ENCODE measurements at regions of chr11 and their contacts with region 1.

Region 1: DNA sequence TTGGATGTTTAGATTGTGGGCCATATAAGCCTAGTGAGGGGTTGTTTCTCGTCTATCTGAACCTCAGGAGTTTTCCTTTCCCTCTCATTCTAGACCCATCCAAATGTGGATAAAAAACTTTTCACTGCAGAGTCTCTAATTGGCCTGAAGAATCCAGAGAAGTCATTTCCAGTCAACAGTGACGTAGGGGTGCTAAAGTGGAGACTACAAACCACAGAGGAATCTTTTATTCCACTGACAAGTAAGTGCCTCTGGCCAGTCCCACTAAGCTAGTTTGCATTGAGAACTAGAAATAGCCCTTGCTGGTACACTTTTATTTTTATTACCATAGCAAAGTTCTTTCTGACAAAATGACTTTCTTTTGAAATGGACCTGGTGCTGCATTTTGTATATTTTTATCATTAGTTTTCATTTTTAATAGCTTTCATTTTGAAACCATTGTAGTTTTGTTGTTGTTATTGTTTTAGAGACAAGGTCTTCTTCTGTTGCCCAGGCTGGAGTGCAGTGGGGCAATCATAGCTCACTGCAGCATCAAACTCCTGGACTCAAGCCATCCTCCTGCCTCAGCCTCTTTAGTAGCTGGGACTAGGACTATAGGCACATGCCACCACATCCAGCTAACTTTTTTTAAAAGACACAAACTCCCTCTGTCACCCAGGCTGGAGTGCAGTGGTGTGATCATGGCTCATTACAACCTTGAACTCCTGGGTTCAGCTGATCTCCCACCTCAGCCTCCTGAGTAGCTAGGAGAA is 14.6 kb upstream of the PHLDB1 start:
- DNase-seq: no peak
- H3K4me3 ChIP-seq: no peak overlapping the region
- H3K27ac ChIP-seq: peak overlapping the region in 1 of 2 experiments; percentile 18; a peak in 1 of 4 replicates
- H3K4me1 ChIP-seq: peaks cover 0 to 6% of the 10 kb centered on the region in 2 experiments; a peak in 2 of 4 replicates
- H3K27me3 ChIP-seq: no peaks in the 10 kb centered on the region
- CTCF ChIP-seq: no peak
- EP300 ChIP-seq: no peak
- RAD21 ChIP-seq: no peak

Region 2: GRCh38 chr11:118581057-118581456 is 11.7 kb before region 1 on chr11:
- CTCF ChIA-PET with region 1: interaction called, 20 read pairs
- POLR2A ChIA-PET with region 1: no interaction called
- DNase-seq: no peak
- H3K4me3 ChIP-seq: no peak overlapping the region
- H3K27ac ChIP-seq: no peak overlapping the region
- H3K4me1 ChIP-seq: no peaks in the 10 kb centered on the region; a peak in 1 of 4 replicates
- H3K27me3 ChIP-seq: no peaks in the 10 kb centered on the region
- CTCF ChIP-seq: no peak
- EP300 ChIP-seq: no peak
- RAD21 ChIP-seq: no peak

Region 3: GRCh38 chr11:118610804-118611795 is 18.3 kb after region 1 on chr11:
- CTCF ChIA-PET with region 1: interaction called, 10 read pairs
- POLR2A ChIA-PET with region 1: no interaction called
- DNase-seq: no peak
- H3K4me3 ChIP-seq: no peak overlapping the region; a peak in 1 of 4 replicates
- H3K27ac ChIP-seq: no peak overlapping the region
- H3K4me1 ChIP-seq: peaks cover 14 to 41% of the 10 kb centered on the region in 2 experiments
- H3K27me3 ChIP-seq: no peaks in the 10 kb centered on the region
- CTCF ChIP-seq: peak; percentile 54
- EP300 ChIP-seq: no peak
- RAD21 ChIP-seq: no peak

Region 4: GRCh38 chr11:118634431-118635236 is 41.8 kb after region 1 on chr11:
- CTCF ChIA-PET with region 1: interaction called, 20 read pairs
- POLR2A ChIA-PET with region 1: no interaction called
- DNase-seq: peak; percentile 69
- H3K4me3 ChIP-seq: no peak overlapping the region
- H3K27ac ChIP-seq: peak overlapping the region in 1 of 2 experiments; percentile 40; a peak in 1 of 4 replicates
- H3K4me1 ChIP-seq: peaks cover 5 to 9% of the 10 kb centered on the region in 2 experiments; a peak in 2 of 4 replicates
- H3K27me3 ChIP-seq: no peaks in the 10 kb centered on the region
- CTCF ChIP-seq: no peak
- EP300 ChIP-seq: no peak
- RAD21 ChIP-seq: no peak

Region 5: DNA sequence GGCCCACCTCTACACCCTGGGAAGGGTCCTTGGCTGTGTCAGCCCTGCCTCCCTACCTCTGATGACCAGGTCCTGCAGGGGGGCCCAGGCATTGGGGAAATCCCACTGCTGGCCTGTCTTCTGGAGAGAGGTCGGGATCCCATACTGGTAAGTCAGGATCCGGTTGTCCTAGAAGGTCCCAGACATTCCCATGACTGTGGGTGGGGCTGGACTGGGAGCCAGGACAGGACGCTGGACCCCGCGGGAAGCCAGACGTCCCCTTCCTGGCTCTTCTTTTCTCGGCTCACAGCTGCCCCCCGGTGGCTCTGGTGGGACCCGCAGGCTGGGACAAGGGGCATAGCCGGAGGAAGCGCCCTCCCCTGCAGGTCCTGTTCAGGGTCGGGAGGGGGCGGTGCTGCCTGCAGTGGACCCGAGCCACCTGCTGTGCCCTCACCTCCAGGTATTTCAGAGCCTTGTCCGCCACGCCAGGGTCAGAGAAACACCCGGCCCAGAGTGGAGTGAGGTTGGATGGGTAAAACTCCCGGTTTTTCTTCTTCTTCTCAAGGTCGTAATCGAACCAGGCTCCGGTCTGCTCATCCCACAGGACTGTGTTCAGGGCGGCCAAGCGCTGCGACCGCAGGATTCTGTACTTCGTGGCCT is 66.6 kb after region 1 on chr11:
- CTCF ChIA-PET with region 1: interaction called, 144 read pairs
- POLR2A ChIA-PET with region 1: no interaction called
- DNase-seq: peak; percentile 96
- H3K4me3 ChIP-seq: peak overlapping the region in 1 of 2 experiments; percentile 28; a peak in 1 of 4 replicates
- H3K27ac ChIP-seq: peak overlapping the region; percentile 6 to 48; a peak in 3 of 4 replicates
- H3K4me1 ChIP-seq: peaks cover 0 to 12% of the 10 kb centered on the region in 2 experiments; a peak in 1 of 4 replicates
- H3K27me3 ChIP-seq: no peaks in the 10 kb centered on the region
- CTCF ChIP-seq: peak; percentile 89
- EP300 ChIP-seq: no peak
- RAD21 ChIP-seq: peak; percentile 84